Activated CD4-positive, alpha-beta T cell treated with anti-CD3 and anti-CD28 coated beads for 36 hours (primary cell): ENCODE measurements at regions of chr9 and their contacts with region 1.

Region 1: DNA sequence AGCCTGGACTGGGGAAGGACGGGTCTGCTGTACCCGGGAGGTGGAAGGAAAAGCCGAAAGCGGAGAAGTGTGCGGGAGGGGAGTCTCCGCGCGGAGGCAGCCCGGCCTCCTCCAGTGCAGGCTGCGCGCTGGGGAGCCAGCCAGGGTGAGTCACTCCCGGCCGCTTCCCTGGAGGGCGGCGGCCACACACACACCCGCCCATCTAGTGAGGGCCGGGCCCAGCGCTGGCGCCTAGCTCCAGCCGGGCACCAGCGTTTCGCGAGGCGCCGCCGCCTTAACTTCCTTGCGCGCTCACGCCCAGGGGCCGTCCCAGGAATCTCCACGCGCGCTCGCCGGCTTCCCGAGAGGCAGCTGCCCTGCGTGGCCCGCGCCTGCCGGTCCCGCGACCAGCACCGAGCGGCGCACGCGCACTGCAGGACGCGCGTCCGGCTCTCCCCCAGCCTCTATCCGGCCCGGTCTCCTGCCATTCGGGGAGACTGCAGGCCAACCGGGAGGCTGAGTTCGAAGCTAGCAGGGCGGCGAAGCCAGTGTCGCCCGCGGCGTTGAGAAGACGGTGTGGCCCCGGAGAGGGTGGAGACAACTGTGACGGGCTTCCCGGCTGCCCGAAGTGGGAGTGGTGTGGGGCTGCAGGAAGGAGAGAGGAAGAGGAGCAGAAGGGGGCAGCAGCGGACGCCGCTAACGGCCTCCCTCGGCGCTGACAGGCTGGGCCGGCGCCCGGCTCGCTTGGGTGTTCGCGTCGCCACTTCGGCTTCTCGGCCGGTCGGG is at the start of gene JAK2:
- DNase-seq: peak; percentile 91
- ATAC-seq: peak; percentile 84
- H3K4me3 Mint-ChIP-seq: no peak within 1 kb of the TSS
- H3K27ac Mint-ChIP-seq: peak within 1 kb of the TSS; percentile 94
- H3K4me1 Mint-ChIP-seq: peaks cover 54% of the 10 kb centered on the region
- H3K27me3 Mint-ChIP-seq: no peaks in the 10 kb centered on the region
- total RNA-seq, gene JAK2: 19.4 to 19.5 TPM

Region 2: GRCh38 chr9:4573634-4574389 is 411.0 kb before region 1 on chr9:
- CTCF ChIA-PET with region 1: no interaction called
- POLR2A ChIA-PET with region 1: no interaction called
- intact Hi-C with region 1: no loop called
- DNase-seq: no peak
- ATAC-seq: no peak
- H3K4me3 Mint-ChIP-seq: no peak overlapping the region
- H3K27ac Mint-ChIP-seq: no peak overlapping the region
- H3K4me1 Mint-ChIP-seq: peaks cover 9% of the 10 kb centered on the region
- H3K27me3 Mint-ChIP-seq: no peaks in the 10 kb centered on the region

Region 3: DNA sequence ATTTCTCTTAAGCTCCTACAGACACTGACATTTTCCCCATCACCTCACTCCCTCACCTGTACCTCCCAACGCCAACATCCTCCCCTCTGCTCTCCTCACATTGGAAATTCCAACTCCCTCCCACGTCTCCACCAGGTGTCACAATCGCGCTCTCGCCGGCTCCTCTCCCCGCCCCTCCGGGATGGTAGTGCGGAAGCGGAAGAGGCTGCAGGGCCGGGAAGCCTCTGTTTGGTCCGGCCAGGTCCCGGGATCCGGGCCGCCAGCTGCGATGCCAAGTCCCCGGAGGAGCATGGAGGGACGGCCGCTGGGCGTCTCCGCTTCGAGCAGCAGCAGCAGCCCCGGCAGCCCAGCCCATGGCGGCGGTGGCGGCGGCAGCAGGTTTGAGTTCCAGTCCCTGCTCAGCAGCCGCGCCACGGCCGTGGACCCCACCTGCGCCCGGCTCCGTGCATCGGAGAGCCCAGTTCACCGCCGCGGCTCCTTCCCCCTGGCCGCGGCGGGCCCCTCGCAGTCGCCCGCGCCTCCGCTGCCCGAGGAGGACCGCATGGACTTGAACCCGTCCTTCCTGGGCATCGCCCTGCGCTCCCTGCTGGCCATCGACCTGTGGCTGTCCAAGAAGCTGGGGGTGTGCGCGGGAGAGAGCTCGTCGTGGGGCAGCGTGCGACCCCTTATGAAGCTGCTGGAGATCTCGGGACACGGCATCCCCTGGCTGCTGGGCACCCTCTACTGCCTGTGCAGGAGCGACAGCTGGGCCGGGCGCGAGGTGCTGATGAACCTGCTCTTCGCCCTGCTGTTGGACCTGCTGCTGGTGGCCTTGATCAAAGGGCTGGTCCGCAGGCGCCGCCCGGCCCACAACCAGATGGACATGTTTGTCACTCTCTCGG is 322.5 kb before region 1 on chr9 and contains the start of gene PLPP6:
- CTCF ChIA-PET with region 1: no interaction called
- POLR2A ChIA-PET with region 1: no interaction called
- intact Hi-C with region 1: loop called in 1 of 2 experiments (anchors 10 kb)
- DNase-seq: peak; percentile 87
- ATAC-seq: peak; percentile 84
- H3K4me3 Mint-ChIP-seq: peak within 1 kb of the TSS; percentile 82
- H3K27ac Mint-ChIP-seq: peak within 1 kb of the TSS; percentile 86
- H3K4me1 Mint-ChIP-seq: peaks cover 53% of the 10 kb centered on the region
- H3K27me3 Mint-ChIP-seq: no peaks in the 10 kb centered on the region
- total RNA-seq, gene PLPP6: 4.3 to 5.0 TPM

Region 4: GRCh38 chr9:4740638-4741364 is 244.0 kb before region 1 on chr9 and contains the start of gene AK3:
- CTCF ChIA-PET with region 1: interaction called, 4 read pairs
- POLR2A ChIA-PET with region 1: no interaction called
- intact Hi-C with region 1: loop called in 1 of 2 experiments (anchors 2 kb)
- DNase-seq: peak; percentile 91
- ATAC-seq: peak; percentile 87
- H3K4me3 Mint-ChIP-seq: peak within 1 kb of the TSS; percentile 88
- H3K27ac Mint-ChIP-seq: peak within 1 kb of the TSS; percentile 93
- H3K4me1 Mint-ChIP-seq: peaks cover 40% of the 10 kb centered on the region
- H3K27me3 Mint-ChIP-seq: no peaks in the 10 kb centered on the region
- total RNA-seq, gene AK3: 32.6 to 41.0 TPM

Region 5: GRCh38 chr9:4832786-4833579 is 151.8 kb before region 1 on chr9:
- CTCF ChIA-PET with region 1: interaction called, 4 read pairs
- POLR2A ChIA-PET with region 1: no interaction called
- intact Hi-C with region 1: loop called (anchors 1 to 2 kb)
- DNase-seq: peak; percentile 81
- ATAC-seq: peak; percentile 94
- H3K4me3 Mint-ChIP-seq: peak overlapping the region; percentile 16
- H3K27ac Mint-ChIP-seq: peak overlapping the region; percentile 84
- H3K4me1 Mint-ChIP-seq: peaks cover 45% of the 10 kb centered on the region
- H3K27me3 Mint-ChIP-seq: no peaks in the 10 kb centered on the region

Region 6: DNA sequence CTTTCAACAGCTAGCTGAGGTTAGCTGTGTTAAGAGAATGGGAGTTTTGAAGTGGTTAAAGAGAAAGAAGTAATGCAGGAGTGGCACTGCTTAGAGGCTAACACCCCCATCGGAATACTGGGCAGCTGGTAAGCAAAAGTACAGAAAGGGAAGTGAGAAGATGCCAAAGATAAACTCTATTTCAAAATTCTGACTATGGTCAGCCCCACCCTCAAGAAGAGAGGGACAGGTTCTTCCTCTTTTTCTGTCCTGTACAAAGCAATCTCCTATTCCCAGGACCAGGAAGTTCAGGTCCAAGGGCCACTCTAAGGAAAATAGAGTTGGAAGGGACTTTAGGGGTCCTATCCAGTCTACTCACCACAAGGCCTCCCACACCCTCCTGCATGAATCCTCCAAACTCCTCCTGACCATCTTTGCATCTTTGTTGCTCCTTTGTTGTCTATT is 45.7 kb before region 1 on chr9:
- CTCF ChIA-PET with region 1: interaction called, 6 read pairs
- POLR2A ChIA-PET with region 1: interaction called, 6 read pairs
- intact Hi-C with region 1: loop called (anchors 1 to 2 kb)
- DNase-seq: no peak
- ATAC-seq: peak; percentile 34
- H3K4me3 Mint-ChIP-seq: no peak overlapping the region
- H3K27ac Mint-ChIP-seq: peak overlapping the region; percentile 72
- H3K4me1 Mint-ChIP-seq: peaks cover 74% of the 10 kb centered on the region
- H3K27me3 Mint-ChIP-seq: no peaks in the 10 kb centered on the region

Region 7: DNA sequence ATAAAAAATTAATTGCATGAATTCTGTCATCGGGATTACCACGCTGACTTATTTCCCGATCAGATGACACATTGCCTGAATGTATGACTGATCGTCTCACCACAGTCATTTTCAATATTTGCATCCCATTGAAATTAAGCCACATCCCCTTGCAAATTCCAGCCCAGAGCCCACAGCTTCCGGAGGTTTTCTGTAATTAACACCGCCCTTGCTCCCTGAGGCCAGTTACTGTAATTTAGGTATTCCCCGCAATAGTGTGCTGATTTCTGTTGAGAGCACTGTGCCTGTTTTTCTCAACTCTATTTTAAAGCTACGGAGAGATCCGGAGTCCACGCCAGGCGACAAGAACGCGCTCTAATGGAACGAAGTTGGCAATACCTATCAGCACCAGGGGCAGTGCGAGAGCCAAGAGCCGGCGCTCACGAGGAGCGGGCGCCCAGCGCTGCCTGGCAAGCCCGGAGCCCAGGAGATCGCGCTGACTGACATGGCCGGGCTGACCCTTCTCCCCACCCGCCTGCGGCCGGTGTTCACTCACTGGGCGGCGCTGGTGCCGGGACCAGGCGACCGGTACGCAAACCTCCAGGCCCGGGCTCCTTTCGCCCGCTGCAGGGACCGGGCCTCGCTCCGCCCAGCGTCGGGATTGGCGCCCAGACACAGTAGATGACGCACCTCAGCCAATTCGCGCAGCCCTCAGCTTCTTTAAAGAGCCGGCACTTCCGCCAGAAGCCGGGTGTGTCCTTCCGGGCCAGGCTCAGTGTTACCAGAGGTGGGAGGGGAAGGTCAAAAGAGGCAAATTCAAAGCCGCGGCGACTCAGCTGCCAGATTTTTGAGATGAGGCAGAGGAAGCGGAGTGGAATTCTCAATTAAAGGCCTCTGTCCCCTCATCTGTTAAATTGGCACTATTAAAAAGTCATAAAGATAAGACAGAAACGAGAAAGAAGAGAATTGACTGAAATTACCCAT is 452.7 kb after region 1 on chr9 and contains the start of gene PLGRKT:
- CTCF ChIA-PET with region 1: no interaction called
- POLR2A ChIA-PET with region 1: no interaction called
- intact Hi-C with region 1: loop called (anchors 5 kb)
- DNase-seq: peak; percentile 95
- ATAC-seq: peak; percentile 90
- H3K4me3 Mint-ChIP-seq: peak within 1 kb of the TSS; percentile 85
- H3K27ac Mint-ChIP-seq: peak within 1 kb of the TSS; percentile 99
- H3K4me1 Mint-ChIP-seq: peaks cover 55% of the 10 kb centered on the region
- H3K27me3 Mint-ChIP-seq: no peaks in the 10 kb centered on the region
- total RNA-seq, gene PLGRKT: 44.0 to 47.9 TPM

Region 8: DNA sequence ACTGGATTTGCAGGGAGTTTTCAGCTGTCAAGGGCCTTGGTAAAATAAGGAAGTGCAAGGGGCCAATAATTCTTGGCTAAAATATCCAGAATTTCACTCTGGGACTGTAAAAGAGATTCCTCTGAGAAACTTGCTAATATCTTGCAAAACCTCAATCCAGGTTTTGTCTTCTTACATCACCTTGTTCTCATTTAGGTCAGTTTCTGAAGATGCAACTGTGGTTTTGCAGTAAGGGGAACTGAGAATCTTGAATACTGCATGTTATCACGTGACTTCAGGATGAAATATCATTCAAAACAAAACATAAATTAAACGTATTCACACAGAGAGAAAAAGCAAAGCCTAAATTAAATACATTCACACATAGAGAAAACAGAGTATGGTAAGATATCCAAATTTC is 609.1 kb after region 1 on chr9:
- CTCF ChIA-PET with region 1: interaction called, 4 read pairs
- POLR2A ChIA-PET with region 1: no interaction called
- intact Hi-C with region 1: loop called (anchors 5 to 10 kb)
- DNase-seq: no peak
- ATAC-seq: no peak
- H3K4me3 Mint-ChIP-seq: no peak overlapping the region
- H3K27ac Mint-ChIP-seq: no peak overlapping the region
- H3K4me1 Mint-ChIP-seq: peaks cover 30% of the 10 kb centered on the region
- H3K27me3 Mint-ChIP-seq: no peaks in the 10 kb centered on the region